MCF 10A (cell line): ENCODE measurements at regions of chr5 and their contacts with region 1.

Region 1: DNA sequence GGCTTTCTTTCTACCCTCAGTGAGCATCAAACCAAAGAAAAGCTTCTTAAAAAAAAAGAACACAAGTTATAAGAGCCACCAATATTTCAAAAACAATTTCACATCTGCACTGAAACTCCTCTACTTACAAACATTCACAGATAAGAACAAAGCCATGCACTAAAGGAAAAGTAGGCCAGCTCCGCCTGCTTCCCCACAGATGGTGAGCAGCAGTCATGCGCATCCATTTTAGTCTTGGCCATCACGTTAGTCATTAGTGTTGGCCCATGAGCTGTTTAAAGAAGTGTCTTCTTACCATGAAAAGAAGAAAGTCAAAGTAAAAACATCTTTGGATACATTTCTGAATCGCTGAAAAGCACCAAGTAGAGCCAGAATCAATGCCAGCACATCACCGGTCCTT is 40.0 kb upstream of the SMIM23 start:
- DNase-seq: no peak
- H3K4me3 Mint-ChIP-seq: no peak overlapping the region
- H3K27ac Mint-ChIP-seq: no peak overlapping the region
- H3K4me1 Mint-ChIP-seq: peaks cover 40% of the 10 kb centered on the region
- H3K27me3 Mint-ChIP-seq: no peaks in the 10 kb centered on the region
- CTCF ChIP-seq: no peak

Region 2: DNA sequence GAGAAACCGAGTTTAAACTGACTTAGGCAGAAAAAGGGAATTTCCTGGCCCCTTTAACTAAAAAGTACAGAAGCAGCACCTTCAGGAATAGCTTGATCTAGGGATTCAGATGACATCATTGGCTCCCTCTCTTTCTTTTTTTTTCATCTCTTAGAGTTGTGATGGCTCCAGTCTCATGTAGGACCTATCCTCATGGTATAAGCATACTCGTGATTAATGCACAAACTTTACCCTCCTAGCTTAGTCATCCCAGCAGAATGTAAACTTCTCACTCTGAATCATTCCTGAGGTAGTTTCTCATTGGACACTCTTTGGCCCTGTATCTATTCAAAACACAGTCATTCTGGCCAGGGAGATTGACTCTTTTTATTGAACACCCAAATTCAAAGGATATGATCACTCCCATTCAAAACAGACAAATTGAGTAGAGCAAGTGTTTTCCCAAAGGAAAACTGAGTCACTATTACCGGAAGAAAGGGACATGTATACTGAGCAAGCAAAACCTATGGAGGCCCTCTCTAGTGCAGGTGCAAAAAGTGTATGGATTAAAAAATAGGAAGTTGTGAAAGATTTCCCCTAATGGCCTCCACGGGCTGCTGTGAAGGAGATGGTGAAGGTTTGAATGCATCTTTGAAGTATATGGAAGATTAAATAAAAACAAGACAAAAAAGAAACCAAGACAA is 12.4 kb after region 1 on chr5:
- CTCF ChIA-PET with region 1: interaction called, 32 read pairs
- POLR2A ChIA-PET with region 1: interaction called, 64 read pairs
- intact Hi-C with region 1: no loop called
- DNase-seq: peak; percentile 95
- H3K4me3 Mint-ChIP-seq: no peak overlapping the region
- H3K27ac Mint-ChIP-seq: peak overlapping the region; percentile 79
- H3K4me1 Mint-ChIP-seq: peaks cover 30% of the 10 kb centered on the region
- H3K27me3 Mint-ChIP-seq: no peaks in the 10 kb centered on the region
- CTCF ChIP-seq: no peak